ENCODE measurements at regions of chr1 and their contacts with region 1.

Region 1: DNA sequence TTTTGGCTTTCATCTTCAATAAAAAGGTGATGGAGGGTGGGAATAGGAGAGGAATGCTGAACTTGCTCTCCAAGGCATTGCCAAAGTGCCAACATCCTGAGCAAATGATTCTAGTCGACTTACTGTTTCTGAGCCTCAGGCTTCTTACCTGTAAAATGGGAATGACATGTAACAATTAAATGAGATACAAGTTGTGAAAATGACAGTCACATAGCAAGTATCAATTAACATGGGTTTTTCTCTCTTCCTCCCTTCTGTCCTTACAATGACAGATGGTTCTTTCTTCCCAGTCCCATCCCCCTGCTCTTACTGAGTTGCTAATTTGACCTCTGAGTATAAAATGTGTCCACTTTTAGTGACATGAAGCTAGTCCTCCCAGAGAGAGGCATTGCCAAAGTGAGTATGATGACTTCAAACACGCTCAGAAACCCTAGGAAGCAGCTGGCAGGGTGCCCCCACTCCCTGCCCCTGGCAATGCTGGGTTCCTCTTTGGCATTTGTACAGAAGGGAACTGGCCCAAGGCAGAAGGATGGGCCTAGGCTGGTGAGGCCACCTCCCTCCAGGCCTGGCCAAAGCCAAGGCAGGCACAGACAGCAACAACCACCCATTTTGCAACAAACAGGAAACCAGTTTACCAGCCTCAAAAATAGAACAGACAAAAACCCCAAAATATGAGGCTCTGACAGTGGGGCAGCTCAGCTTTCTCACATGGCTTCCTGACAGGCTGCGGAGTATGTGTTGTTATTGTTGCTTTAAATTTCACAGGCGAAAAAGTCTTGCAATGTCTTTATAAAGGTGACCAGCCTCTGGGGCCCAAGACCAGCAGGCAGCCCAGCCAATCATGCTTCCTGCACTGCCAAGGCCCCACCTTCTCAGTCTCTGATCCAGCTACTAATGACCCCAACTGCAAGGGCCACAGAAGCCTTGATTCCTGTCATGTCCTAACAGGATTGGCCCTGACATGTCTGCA is 115.9 kb downstream of the HIVEP3 start:
- DNase-seq: peak; percentile 51 to 64 (median 59)
- H3K4me3 ChIP-seq: peak overlapping the region in 1 of 2 donors; percentile 35
- H3K4me3 Mint-ChIP-seq: peak overlapping the region; percentile 12 to 79 (median 72)
- H3K27ac ChIP-seq: peak overlapping the region; percentile 55
- H3K27ac Mint-ChIP-seq: peak overlapping the region; percentile 75 to 97 (median 93)
- H3K4me1 ChIP-seq: peaks cover 87% of the 10 kb centered on the region
- H3K4me1 Mint-ChIP-seq: peaks cover 72 to 93% (median 82%) of the 10 kb centered on the region in 4 donors
- H3K27me3 ChIP-seq: no peaks in the 10 kb centered on the region
- H3K27me3 Mint-ChIP-seq: no peaks in the 10 kb centered on the region

Region 2: GRCh38 chr1:41689558-41689981 is 113.2 kb before region 1 on chr1:
- CTCF ChIA-PET with region 1: no interaction called
- POLR2A ChIA-PET with region 1: no interaction called
- intact Hi-C with region 1: no loop called
- DNase-seq: no peak
- H3K4me3 ChIP-seq: no peak overlapping the region
- H3K4me3 Mint-ChIP-seq: no peak overlapping the region
- H3K27ac ChIP-seq: no peak overlapping the region
- H3K27ac Mint-ChIP-seq: no peak overlapping the region
- H3K4me1 ChIP-seq: peaks cover 17% of the 10 kb centered on the region
- H3K4me1 Mint-ChIP-seq: peaks cover 25 to 53% (median 28%) of the 10 kb centered on the region in 4 donors
- H3K27me3 ChIP-seq: no peaks in the 10 kb centered on the region
- H3K27me3 Mint-ChIP-seq: no peaks in the 10 kb centered on the region

Region 3: DNA sequence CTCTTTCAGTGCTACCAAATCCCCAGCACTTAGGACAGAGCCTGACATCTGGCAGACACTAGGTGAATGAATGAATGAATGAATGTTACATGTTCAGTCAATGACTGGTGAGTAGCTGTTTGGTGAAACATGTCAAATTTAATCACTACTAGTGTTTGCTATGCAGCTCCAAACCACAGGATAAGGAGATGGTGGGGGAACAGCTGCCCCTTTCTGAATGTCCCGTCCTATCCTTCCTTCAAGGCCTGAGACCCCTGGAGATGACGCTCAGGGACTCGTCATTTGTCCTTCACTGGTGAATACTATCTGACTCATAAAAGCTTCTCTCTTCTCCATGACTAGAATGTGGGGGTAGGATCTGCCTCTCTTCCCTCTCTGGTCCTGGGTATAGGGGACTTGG is 59.5 kb before region 1 on chr1:
- CTCF ChIA-PET with region 1: no interaction called
- POLR2A ChIA-PET with region 1: no interaction called
- intact Hi-C with region 1: no loop called
- DNase-seq: no peak
- H3K4me3 ChIP-seq: no peak overlapping the region
- H3K4me3 Mint-ChIP-seq: no peak overlapping the region
- H3K27ac ChIP-seq: no peak overlapping the region
- H3K27ac Mint-ChIP-seq: peak overlapping the region in 1 of 7 donors; percentile 20
- H3K4me1 ChIP-seq: peaks cover 31% of the 10 kb centered on the region
- H3K4me1 Mint-ChIP-seq: peaks cover 25 to 59% (median 34%) of the 10 kb centered on the region in 4 donors
- H3K27me3 ChIP-seq: no peaks in the 10 kb centered on the region
- H3K27me3 Mint-ChIP-seq: no peaks in the 10 kb centered on the region

Region 4: GRCh38 chr1:41791667-41792484 is 10.9 kb before region 1 on chr1:
- CTCF ChIA-PET with region 1: interaction called, 8 read pairs
- POLR2A ChIA-PET with region 1: interaction called, 35 read pairs
- intact Hi-C with region 1: no loop called
- DNase-seq: no peak
- H3K4me3 ChIP-seq: no peak overlapping the region
- H3K4me3 Mint-ChIP-seq: peak overlapping the region; percentile 21 to 85 (median 74)
- H3K27ac ChIP-seq: no peak overlapping the region
- H3K27ac Mint-ChIP-seq: peak overlapping the region; percentile 5 to 94 (median 73)
- H3K4me1 ChIP-seq: peaks cover 41% of the 10 kb centered on the region
- H3K4me1 Mint-ChIP-seq: peaks cover 35 to 45% (median 42%) of the 10 kb centered on the region in 4 donors
- H3K27me3 ChIP-seq: no peaks in the 10 kb centered on the region
- H3K27me3 Mint-ChIP-seq: no peaks in the 10 kb centered on the region

Measured in CD4-positive, alpha-beta memory T cell (primary cell).